Activated T-helper 1 cell treated with anti-CD3 and anti-CD28 coated beads, Interleukin-12 subunit alpha, Interleukin-12 subunit beta, Interleukin-2, Interleukin-4 antibody, amounts not matched to agents 30 ng/mL and 10 ng/mL and 1 ng/mL, durations not matched to agents 14 hours and 24 hours and 36 hours (primary cell): ENCODE measurements at regions of chr15 and their contacts with region 1.

Region 1: DNA sequence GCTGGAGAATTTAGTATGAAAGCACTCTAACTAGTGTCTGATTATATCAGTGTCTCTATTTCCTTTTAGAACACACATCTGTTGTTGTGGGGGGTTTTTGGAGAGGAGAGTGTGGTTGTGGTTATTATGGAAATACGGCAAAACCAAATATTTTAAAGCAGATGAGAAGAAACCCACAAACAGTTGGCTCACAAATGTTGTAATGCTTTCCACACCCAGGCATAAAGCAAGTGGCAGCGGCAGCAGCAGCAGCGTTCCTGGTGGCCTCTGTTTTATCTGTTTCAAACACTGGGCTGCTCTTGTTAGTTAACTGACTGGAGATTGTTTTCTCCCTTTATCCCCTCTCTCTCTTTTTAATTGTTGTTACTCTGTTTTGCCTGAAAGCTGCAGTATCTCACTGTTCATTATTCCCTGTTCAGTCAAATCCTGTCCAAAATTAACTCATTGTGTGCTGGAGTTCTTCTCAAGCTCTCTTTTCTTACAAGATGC is 1045.5 kb upstream of the NR2F2 start:
- DNase-seq: peak; percentile 53
- H3K4me3 Mint-ChIP-seq: peak overlapping the region; percentile 52
- H3K27ac Mint-ChIP-seq: peak overlapping the region; percentile 90
- H3K4me1 Mint-ChIP-seq: peaks cover 77% of the 10 kb centered on the region
- H3K27me3 Mint-ChIP-seq: peaks cover 15% of the 10 kb centered on the region

Region 2: DNA sequence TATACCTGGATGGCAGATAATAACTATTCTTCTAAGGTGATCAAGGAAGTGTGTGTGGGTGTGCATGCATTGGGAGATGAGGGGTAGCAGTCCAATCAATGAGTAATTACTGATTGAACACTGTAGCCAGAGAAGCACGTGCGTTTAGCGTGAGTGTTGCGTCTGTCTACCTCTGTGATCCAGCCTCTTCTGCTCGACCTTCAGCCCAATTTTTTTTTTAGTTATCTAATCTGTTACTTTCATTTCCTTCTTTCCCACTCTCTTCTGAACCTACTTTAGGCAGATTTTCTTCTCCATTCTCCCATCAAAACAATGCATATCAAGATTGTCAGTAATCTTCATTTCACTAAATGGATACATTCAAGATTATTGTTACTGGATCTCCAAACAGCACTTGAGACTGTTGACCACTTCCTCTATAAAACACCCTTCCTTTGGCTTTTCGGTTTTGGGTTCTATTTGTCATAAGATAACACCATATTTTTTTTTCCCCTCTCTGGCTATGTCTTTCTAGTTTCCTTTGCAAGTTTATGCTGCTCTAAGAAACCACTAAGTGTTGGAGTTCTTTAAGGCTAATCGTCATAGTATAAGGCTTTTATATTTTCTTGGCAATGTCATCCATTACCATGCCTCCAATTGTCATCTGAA is 1012.6 kb before region 1 on chr15:
- intact Hi-C with region 1: loop called (anchors 10 kb)
- DNase-seq: no peak
- H3K4me3 Mint-ChIP-seq: no peak overlapping the region
- H3K27ac Mint-ChIP-seq: no peak overlapping the region
- H3K4me1 Mint-ChIP-seq: peaks cover 12% of the 10 kb centered on the region
- H3K27me3 Mint-ChIP-seq: no peaks in the 10 kb centered on the region

Region 3: GRCh38 chr15:95032156-95032555 is 252.8 kb before region 1 on chr15:
- intact Hi-C with region 1: no loop called
- DNase-seq: no peak
- H3K4me3 Mint-ChIP-seq: no peak overlapping the region
- H3K27ac Mint-ChIP-seq: no peak overlapping the region
- H3K4me1 Mint-ChIP-seq: no peaks in the 10 kb centered on the region
- H3K27me3 Mint-ChIP-seq: no peaks in the 10 kb centered on the region

Region 4: DNA sequence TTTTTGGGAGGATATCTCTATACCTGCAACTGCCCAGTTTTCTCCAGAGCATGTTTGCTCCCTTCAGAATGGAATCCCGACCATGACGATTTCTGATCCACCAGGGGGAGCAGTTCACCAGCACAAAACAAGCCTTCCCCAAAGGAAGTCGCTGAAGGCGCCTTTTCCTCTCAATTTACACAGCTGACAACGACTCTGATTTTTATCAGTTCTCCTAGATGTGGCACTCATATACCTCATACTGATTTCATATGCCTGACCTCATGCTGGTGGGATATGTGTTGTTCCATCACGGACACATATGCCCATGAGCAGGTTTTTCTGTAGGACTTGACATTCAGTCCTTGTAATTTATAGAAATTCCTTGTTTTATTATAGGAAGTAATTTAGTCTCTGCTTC is 25.5 kb before region 1 on chr15:
- intact Hi-C with region 1: loop called (anchors 2 kb)
- DNase-seq: peak; percentile 49
- H3K4me3 Mint-ChIP-seq: no peak overlapping the region
- H3K27ac Mint-ChIP-seq: no peak overlapping the region
- H3K4me1 Mint-ChIP-seq: peaks cover 12% of the 10 kb centered on the region
- H3K27me3 Mint-ChIP-seq: peaks cover 54% of the 10 kb centered on the region

Region 5: DNA sequence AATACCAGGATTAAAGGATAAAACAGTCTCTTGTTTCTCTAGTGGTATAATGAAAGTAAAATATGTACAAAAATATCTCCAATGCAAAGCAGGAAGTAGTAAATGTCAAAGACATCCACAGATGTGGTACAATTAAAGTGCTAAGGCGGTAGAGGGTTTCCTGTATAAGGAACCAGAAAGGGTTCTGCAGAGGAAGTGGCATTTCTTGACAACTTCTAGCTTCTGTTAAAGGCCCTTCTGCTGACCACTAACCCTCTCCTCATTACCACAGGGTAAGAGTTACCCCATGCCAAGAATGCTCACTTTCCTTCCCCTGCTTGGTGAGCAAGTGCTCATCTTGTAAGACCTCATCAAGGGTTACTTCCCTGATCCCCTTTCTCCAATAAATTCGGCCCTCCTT is 161.9 kb after region 1 on chr15:
- intact Hi-C with region 1: loop called (anchors 1 kb)
- DNase-seq: peak; percentile 30
- H3K4me3 Mint-ChIP-seq: peak overlapping the region; percentile 48
- H3K27ac Mint-ChIP-seq: peak overlapping the region; percentile 78
- H3K4me1 Mint-ChIP-seq: peaks cover 27% of the 10 kb centered on the region
- H3K27me3 Mint-ChIP-seq: peaks cover 6% of the 10 kb centered on the region

Region 6: DNA sequence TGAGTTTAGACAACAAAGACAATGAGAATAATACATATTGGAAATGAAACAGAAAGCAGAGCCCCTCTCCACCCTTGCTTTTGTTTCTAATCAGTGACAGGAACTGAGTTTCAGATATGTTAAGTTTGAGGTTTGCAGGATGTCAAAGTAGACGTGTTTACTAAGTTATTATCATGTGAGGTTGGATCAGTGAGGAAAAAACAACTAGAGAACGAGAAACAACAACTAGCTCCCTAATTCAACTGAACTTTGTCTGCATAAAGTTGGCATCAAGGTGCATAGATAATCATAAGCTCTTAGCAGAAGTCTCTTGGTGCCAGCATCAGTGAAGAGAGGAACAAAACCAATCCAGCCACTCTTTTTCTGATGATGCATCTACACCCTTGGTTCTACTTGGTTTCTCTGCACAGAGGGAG is 554.4 kb after region 1 on chr15:
- intact Hi-C with region 1: loop called (anchors 10 kb)
- DNase-seq: peak; percentile 25
- H3K4me3 Mint-ChIP-seq: peak overlapping the region; percentile 38
- H3K27ac Mint-ChIP-seq: peak overlapping the region; percentile 64
- H3K4me1 Mint-ChIP-seq: peaks cover 46% of the 10 kb centered on the region
- H3K27me3 Mint-ChIP-seq: peaks cover 5% of the 10 kb centered on the region

Region 7: DNA sequence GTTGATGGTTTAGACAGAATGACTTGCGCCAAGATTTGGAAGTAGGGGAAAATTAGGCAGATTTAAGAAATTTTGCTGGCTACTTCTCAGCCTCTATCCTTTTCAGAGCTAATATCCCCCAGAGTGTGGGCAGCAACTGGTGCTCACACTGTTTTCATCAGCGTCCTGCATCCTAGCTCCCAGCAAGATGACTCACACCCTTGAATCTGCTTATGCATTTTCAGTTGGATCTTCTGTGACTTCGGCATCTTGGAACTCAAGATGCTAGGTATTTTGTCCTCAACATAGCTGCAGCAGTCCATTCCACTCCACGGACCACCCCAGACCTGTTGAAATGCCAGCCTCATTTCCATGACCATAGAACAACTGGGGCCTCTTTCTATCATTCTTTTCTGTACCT is 709.4 kb after region 1 on chr15:
- intact Hi-C with region 1: loop called (anchors 10 kb)
- DNase-seq: no peak
- H3K4me3 Mint-ChIP-seq: no peak overlapping the region
- H3K27ac Mint-ChIP-seq: no peak overlapping the region
- H3K4me1 Mint-ChIP-seq: peaks cover 25% of the 10 kb centered on the region
- H3K27me3 Mint-ChIP-seq: peaks cover 26% of the 10 kb centered on the region